ENCODE measurements at regions of chr7 and their contacts with region 1.

Region 1: DNA sequence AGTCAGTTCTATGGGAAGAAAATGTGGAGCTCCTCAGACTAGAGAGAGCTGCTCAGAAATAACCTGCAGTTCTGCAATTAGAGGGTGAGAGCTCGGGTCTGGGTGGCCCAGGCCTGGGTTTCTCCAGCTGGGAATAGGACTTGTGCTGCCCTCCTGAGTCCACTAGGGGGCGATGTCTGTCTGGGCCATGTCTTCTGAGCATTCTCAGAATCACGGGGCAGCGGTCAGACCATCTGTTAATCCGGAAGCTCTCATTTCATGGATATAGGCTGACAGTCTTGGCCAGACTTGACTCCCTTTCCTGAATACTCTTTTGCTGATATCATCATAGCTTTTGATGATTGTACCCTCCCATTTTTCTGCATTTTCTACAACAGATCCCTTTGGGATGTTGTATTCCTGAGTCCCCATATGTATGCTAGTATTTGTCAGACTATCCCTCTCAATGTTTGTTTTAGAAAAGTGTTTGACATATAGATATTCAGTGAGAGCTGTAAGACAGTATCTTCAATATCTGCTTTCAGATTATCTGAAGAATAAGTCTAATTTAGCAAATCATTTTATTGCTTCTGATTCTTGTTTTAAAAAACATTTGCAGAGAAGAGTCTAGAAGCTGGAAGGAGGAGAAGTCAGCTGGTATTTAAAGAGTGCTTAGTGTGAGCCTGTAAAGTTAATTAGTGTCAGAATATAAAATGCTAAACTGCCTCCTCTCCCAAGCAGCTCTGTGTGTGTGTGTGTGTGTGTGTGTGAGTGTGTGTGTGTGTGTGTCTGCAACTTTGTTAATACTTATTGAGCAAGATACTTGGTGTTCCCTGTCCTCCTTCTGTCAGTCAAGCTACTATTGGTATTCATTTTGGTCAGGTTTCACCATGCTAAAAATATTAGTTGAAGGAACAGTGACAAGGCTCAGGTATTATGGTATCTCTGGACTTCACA is 38.0 kb downstream of the STARD3NL start:
- DNase-seq: peak; percentile 79
- CTCF ChIP-seq: peak; percentile 86

Region 2: GRCh38 chr7:38142736-38143135 is 73.3 kb before region 1 on chr7:
- CTCF ChIA-PET with region 1: interaction called, 11 read pairs
- POLR2A ChIA-PET with region 1: no interaction called
- DNase-seq: no peak
- CTCF ChIP-seq: no peak

Region 3: DNA sequence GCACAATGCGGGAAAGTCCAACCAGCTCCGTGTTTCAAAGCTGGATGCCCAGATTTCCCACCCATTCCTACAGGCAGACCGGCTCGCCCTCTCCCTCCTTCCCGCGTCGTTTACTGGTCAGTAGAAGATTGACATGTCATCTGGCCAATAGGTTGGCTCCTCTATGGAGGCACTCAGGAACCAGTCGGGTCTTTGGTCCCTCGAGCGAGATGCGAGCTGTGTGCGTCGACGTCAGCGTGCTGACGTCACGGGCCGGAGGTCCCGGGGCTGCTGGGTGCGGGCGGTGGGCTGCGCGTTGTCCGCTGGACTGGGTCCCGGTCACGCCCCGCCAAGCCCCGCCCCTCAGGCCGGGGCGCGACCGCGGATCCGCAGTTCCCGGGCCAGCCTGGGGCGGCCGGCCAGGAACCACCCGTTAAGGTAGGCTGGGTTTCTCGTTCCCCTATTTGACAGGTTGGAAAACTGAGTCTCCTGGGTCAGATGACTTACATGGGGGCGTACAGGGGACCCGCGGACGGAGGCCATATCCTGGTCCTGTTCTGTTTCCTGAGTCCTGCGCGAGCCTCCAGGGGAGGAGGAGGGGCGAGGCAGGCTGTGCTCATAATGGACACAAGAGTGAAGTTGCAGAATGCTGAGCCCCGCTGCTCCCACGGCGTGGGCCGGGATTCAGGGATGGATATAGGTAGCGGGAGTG is 37.9 kb before region 1 on chr7 and contains the start of gene STARD3NL:
- CTCF ChIA-PET with region 1: interaction called, 31 read pairs
- POLR2A ChIA-PET with region 1: no interaction called
- DNase-seq: peak; percentile 97
- CTCF ChIP-seq: no peak

Region 4: GRCh38 chr7:38232502-38233366 is 16.7 kb after region 1 on chr7:
- CTCF ChIA-PET with region 1: interaction called, 73 read pairs
- POLR2A ChIA-PET with region 1: no interaction called
- DNase-seq: peak; percentile 69
- CTCF ChIP-seq: no peak

Region 5: GRCh38 chr7:38335492-38336147 is 119.6 kb after region 1 on chr7:
- CTCF ChIA-PET with region 1: interaction called, 81 read pairs
- POLR2A ChIA-PET with region 1: no interaction called
- DNase-seq: peak; percentile 84
- CTCF ChIP-seq: peak; percentile 100

Measured in GM10248 (cell line).